BJ (cell line): ENCODE measurements at regions of chr6 and their contacts with region 1.

Region 1: DNA sequence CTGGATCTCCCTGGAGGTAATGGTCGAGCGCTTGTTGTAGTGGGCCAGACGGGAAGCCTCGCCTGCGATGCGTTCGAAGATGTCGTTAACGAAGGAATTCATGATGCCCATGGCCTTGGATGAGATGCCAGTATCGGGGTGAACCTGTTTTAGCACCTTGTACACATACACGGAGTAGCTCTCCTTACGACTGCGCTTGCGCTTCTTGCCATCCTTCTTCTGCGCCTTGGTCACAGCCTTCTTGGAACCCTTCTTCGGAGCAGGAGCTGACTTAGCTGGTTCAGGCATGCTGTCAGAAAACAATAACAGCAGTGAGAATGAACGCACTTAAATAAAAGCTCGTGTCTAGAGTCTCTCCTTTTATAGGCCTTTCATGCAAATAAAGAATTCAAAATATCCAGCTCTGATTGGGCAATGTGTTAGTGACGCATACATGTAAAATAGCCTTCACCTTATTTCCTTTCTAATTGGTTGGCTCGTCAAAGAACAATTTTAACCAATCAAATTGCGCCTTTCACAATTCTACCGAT is 129.2 kb downstream of the HFE start:
- DNase-seq: peak; percentile 100
- H3K4me3 ChIP-seq: peak overlapping the region; percentile 59
- H3K27me3 ChIP-seq: no peaks in the 10 kb centered on the region
- CTCF ChIP-seq: no peak

Region 2: DNA sequence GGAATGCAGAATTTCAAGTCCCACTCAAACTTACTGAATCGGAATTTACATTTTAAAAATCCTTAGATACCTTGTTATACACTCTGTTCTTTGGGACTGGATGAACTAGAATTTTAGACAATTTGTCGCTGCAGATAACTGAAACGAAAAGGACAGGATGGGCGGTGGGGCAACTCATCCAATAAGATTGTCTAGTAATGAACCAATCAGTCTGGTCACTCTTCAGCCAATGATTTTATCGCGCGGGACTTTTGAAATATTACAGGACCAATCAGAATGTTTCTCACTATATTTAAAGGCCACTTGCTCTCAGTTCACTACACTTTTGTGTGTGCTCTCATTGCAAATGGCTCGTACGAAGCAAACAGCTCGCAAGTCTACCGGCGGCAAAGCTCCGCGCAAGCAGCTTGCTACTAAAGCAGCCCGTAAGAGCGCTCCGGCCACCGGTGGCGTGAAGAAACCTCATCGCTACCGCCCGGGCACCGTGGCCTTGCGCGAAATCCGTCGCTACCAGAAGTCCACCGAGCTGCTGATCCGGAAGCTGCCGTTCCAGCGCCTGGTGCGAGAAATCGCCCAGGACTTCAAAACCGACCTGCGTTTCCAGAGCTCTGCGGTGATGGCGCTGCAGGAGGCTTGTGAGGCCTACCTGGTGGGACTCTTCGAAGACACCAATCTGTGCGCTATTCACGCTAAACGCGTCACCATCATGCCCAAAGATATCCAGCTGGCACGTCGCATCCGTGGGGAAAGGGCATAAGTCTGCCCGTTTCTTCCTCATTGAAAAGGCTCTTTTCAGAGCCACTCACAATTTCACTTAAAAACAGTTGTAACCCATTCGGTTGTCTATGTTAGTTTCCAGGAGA is 171.1 kb before region 1 on chr6:
- CTCF ChIA-PET with region 1: no interaction called
- POLR2A ChIA-PET with region 1: interaction called, 16 read pairs
- DNase-seq: peak; percentile 87
- H3K4me3 ChIP-seq: peak overlapping the region; percentile 51
- H3K27me3 ChIP-seq: no peaks in the 10 kb centered on the region
- CTCF ChIP-seq: peak; percentile 30; the same call in 1 of the 2 replicates

Region 3: GRCh38 chr6:26156076-26156849 is 60.2 kb before region 1 on chr6:
- CTCF ChIA-PET with region 1: no interaction called
- POLR2A ChIA-PET with region 1: interaction called, 20 read pairs
- DNase-seq: peak; percentile 65
- H3K4me3 ChIP-seq: peak overlapping the region; percentile 54
- H3K27me3 ChIP-seq: no peaks in the 10 kb centered on the region
- CTCF ChIP-seq: no peak; the same call in 1 of the 2 replicates

Region 4: GRCh38 chr6:26196846-26197648 is 19.4 kb before region 1 on chr6:
- CTCF ChIA-PET with region 1: no interaction called
- POLR2A ChIA-PET with region 1: interaction called, 74 read pairs
- DNase-seq: peak; percentile 83
- H3K4me3 ChIP-seq: peak overlapping the region; percentile 82
- H3K27me3 ChIP-seq: no peaks in the 10 kb centered on the region
- CTCF ChIP-seq: 0 out of 2 replicates have a peak, but pooled peaks have one; percentile 13

Region 5: GRCh38 chr6:26270903-26271667 is 54.7 kb after region 1 on chr6:
- CTCF ChIA-PET with region 1: interaction called, 7 read pairs
- POLR2A ChIA-PET with region 1: interaction called, 16 read pairs
- DNase-seq: peak; percentile 61
- H3K4me3 ChIP-seq: peak overlapping the region; percentile 53
- H3K27me3 ChIP-seq: no peaks in the 10 kb centered on the region
- CTCF ChIP-seq: no peak

Region 6: GRCh38 chr6:26485112-26485780 is 268.8 kb after region 1 on chr6:
- CTCF ChIA-PET with region 1: no interaction called
- POLR2A ChIA-PET with region 1: no interaction called
- DNase-seq: no peak
- H3K4me3 ChIP-seq: no peak overlapping the region
- H3K27me3 ChIP-seq: peaks cover 3% of the 10 kb centered on the region
- CTCF ChIP-seq: no peak

Region 7: DNA sequence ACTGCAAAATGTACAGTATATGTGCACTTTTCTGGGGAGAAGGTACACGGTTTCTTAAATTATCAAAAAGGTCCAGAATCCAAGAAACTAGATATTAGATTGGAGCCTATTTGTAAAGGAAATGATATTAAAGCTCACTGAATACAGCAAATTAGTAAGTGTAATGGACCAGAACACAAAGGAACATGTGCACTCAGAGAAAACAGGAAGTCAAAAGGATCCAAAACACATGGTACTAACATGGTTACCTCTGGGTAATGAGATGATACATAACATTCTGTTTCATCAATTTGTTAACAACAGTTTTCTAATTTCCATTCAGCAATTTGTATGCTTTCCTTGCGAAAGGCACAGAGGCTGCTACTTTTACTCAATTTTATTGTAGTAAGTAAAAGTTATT is 424.4 kb after region 1 on chr6:
- CTCF ChIA-PET with region 1: no interaction called
- POLR2A ChIA-PET with region 1: no interaction called
- DNase-seq: no peak
- H3K4me3 ChIP-seq: no peak overlapping the region
- H3K27me3 ChIP-seq: no peaks in the 10 kb centered on the region
- CTCF ChIP-seq: no peak

Region 8: DNA sequence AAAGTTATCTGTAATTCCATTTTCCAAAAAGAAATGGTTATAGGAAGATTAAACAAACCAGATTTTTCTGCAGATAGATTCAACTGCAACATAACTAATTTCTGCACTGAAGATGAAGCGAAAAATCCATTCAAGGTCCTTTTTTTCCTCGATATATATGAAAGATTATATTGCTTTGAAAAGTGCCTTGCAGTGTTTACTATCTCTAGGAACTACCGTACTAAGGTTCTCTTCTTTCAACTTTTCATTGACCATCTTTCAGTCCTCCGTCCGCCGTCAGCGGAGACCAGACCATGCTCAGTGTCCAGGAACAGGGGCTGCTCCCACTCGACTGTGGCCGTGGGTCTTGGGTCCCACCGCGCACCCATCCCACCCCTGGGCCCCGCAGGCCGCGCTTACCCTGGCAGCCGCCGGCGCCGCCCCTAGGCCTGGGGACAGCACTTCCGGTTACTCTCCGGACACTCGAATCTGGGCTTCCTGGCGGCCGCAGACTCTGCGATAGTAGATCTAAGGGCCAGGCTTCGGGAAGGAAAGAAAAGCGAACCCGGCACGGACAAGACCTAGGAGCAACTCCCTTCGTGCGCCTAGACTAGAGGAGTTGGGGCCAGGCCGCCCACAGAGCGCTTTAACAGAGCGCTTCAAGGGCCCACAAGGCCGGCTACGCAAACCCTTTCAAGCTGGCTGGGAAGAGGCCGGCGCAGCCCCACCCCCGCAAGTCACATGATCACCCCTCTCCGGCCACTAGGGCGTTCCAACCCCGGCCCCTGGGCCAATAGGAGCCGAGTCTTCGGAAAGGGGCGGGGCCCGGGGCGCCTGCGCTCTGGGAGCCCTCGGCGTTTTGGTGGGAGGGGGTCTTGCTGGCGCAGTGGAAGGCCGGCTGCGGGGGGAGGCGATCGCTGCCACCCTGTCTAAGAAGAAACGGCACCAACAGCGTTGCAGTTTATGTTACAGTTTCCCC is 442.9 kb after region 1 on chr6 and contains the start of gene ZNF322:
- CTCF ChIA-PET with region 1: no interaction called
- POLR2A ChIA-PET with region 1: no interaction called
- DNase-seq: peak; percentile 55
- H3K4me3 ChIP-seq: peak within 1 kb of the TSS; percentile 97
- H3K27me3 ChIP-seq: no peaks in the 10 kb centered on the region; the same call in 1 of the 2 replicates
- CTCF ChIP-seq: no peak
- polyA plus RNA-seq, gene ZNF322: 13.5 and 13.9 TPM in 2 replicates